A549 (cell line): ENCODE measurements at regions of chr3 and their contacts with region 1.

Region 1: DNA sequence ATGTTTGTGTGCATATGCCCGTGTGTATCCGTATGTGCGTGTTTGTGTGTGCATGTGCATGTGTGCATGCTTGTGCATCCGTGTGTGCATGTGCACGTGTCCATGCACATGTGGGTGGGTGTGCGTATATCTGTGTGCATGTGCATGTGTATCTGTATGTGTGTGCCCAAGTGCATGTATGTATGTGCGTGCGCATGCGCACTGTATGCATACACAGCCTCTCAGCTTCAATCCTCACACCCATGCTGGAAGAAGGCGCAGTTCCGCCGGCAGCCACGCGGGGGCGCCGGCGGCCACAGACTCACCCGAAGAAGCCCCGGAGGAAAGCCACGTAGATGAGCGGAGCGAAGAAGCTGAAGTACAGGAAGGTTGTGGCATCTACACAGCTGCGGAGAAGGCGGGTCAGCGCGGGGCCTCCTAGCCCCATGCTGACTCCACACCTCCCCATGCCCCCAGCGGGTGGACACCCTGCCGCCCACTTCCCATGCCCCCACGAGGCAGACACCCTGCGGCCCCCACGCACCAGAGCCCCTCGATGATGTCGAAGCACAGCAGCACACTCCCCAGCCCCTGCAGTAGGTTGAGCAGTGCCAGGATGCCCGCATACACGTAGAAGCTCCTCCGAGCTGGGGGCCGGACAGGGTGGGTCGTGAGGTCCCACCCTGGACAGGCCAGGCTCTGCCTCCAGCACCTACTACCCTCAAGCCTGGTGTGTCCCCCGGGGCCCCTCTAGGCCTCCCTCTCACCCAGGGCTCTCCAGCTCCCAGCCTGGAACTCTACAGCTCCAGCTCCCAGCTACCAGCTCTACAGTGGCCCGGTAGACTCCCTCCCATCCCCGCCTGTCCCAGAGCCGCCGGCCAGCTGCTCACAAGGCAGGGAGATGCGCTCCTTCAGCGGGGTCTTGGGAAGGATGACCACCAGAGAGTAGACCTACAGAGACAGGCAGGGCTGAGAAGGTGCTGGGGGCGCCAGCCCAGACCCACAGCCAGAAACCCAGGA is 15.4 kb downstream of the TPRA1 start:
- DNase-seq: peak; percentile 89
- ATAC-seq: peak; percentile 80 to 95
- H3K4me3 ChIP-seq: no peak overlapping the region
- H3K27ac ChIP-seq: peak overlapping the region in 1 of 2 experiments; percentile 54; a peak in 2 of 6 replicates
- H3K4me1 ChIP-seq: peaks cover 5% of the 10 kb centered on the region
- CTCF ChIP-seq: peak; percentile 78
- EP300 ChIP-seq: no peak
- POLR2A ChIP-seq: no peak
- RAD21 ChIP-seq: peak; percentile 59 to 70

Region 2: DNA sequence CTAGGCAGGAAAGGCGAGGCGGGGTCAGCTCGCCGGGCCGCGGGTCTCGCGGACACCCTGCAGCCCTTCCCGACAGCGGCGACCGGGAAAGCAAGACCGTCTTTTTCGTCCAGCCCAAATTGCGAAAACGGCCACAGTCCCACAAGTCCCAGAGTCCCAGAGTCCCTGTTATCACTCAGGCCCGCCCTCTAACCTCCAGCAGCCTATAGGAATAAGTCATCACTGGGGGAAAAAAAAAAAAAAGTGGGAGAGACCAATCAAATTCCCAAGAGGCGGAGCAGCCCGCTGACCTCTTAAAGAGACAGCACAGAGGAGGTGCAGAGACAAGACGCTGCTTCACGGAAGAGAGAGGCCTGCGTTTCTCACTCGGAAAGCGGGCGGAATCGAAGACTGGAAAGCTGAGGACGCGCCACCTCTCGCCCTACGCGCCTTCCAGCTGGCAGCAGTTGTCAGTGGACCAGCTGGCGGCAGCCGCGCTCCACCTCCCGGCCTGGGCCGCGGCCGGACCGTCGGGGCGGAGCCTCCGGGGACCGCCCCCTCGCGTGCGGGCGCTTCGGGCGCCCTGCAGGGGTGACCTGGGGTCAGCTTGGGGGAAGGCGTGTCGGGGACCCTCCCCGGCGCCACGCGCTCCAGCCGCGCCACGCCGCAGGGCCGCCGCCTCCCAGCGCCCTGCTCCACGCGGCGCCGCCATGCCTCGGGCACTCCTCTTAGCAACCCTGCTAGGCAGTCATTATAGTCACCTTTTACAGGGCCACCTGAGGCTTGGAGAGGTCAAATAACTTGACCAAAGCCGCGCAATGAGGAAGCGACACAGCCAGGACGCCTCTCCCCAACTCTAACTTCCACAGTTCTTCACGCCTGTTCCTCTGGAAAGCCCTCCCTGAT is 15.7 kb after region 1 on chr3 and contains the start of gene TPRA1:
- CTCF ChIA-PET with region 1: interaction called, 64 read pairs
- POLR2A ChIA-PET with region 1: no interaction called
- DNase-seq: peak; percentile 91 to 96
- ATAC-seq: peak; percentile 82 to 92
- H3K4me3 ChIP-seq: peak within 1 kb of the TSS; percentile 92
- H3K27ac ChIP-seq: peak within 1 kb of the TSS; percentile 90 to 96
- H3K4me1 ChIP-seq: peaks cover 20% of the 10 kb centered on the region
- CTCF ChIP-seq: 0 out of 3 replicates have a peak, but pooled peaks have one; percentile 21
- EP300 ChIP-seq: no peak
- POLR2A ChIP-seq: peak; percentile 41
- RAD21 ChIP-seq: peak in 1 of 2 experiments; percentile 55; a peak in 4 of 5 replicates
- polyA plus RNA-seq, gene TPRA1: 13.5 and 17.5 TPM in 2 replicates

Region 3: DNA sequence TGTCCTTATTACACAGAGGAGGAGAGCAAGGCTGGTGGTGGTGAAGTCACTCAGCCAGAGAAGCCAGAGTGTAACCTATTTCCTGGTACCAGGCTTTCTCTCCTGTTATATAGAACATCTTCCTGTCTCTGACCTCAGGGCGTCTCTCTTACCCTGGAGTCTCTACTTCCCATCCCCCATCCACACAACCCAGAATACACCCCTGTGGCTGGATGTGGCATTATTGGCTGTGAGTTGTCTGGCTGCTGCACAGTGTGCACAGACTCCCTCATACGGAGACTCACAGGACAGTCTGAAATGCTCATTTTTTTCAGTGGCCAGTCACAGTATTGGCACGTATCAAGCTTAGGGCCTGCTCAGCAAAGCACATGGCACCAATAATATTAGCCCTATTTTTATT is 62.4 kb after region 1 on chr3:
- CTCF ChIA-PET with region 1: interaction called, 11 read pairs
- POLR2A ChIA-PET with region 1: no interaction called
- DNase-seq: no peak
- ATAC-seq: peak; percentile 39 to 68; a peak in 4 of 6 replicates
- H3K4me3 ChIP-seq: no peak overlapping the region
- H3K27ac ChIP-seq: no peak overlapping the region
- H3K4me1 ChIP-seq: no peaks in the 10 kb centered on the region
- CTCF ChIP-seq: no peak
- EP300 ChIP-seq: no peak
- POLR2A ChIP-seq: no peak
- RAD21 ChIP-seq: no peak